ENCODE measurements at regions of chr2 and their contacts with region 1.

Region 1: DNA sequence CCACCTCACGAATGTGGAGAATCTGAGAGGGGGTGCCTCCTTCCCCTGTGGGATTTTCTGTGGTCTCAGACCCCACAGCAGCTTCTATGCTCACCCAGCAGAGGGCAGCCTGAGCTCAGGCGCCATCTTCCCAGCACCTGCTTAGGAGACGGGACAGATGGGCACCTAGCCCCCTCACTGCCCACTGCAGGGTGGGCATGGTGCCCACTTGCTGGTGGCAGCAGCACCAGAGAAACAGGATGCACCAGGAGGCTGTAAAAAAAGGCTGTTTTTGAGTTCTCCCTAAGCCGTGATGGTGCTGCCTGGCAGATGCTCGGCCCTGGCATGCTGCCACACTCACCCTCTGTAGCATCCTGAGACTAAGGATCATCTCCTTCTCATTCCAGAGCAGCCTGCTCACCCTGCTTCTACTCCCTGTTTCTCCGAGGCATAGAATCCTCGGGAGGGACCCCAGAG is 19.1 kb upstream of the SLC20A1 start:
- DNase-seq: peak; percentile 75
- ATAC-seq: peak; percentile 30
- H3K4me3 Mint-ChIP-seq: peak overlapping the region; percentile 50
- H3K27ac Mint-ChIP-seq: peak overlapping the region; percentile 85
- H3K4me1 Mint-ChIP-seq: peaks cover 57% of the 10 kb centered on the region
- H3K27me3 Mint-ChIP-seq: peaks cover 3% of the 10 kb centered on the region

Region 2: GRCh38 chr2:112259509-112260294 is 366.9 kb before region 1 on chr2:
- POLR2A ChIA-PET with region 1: no interaction called
- DNase-seq: peak; percentile 79
- ATAC-seq: peak; percentile 21
- H3K4me3 Mint-ChIP-seq: peak overlapping the region; percentile 51
- H3K27ac Mint-ChIP-seq: peak overlapping the region; percentile 79
- H3K4me1 Mint-ChIP-seq: peaks cover 15% of the 10 kb centered on the region
- H3K27me3 Mint-ChIP-seq: peaks cover 11% of the 10 kb centered on the region

Region 3: GRCh38 chr2:112584134-112584890 is 42.3 kb before region 1 on chr2 and contains the start of gene CHCHD5:
- POLR2A ChIA-PET with region 1: interaction called, 11 read pairs
- DNase-seq: peak; percentile 91
- ATAC-seq: peak; percentile 90
- H3K4me3 Mint-ChIP-seq: peak within 1 kb of the TSS; percentile 97
- H3K27ac Mint-ChIP-seq: peak within 1 kb of the TSS; percentile 99
- H3K4me1 Mint-ChIP-seq: peaks cover 29% of the 10 kb centered on the region
- H3K27me3 Mint-ChIP-seq: no peaks in the 10 kb centered on the region
- total RNA-seq, gene CHCHD5: 32.1 to 35.2 TPM

Region 4: DNA sequence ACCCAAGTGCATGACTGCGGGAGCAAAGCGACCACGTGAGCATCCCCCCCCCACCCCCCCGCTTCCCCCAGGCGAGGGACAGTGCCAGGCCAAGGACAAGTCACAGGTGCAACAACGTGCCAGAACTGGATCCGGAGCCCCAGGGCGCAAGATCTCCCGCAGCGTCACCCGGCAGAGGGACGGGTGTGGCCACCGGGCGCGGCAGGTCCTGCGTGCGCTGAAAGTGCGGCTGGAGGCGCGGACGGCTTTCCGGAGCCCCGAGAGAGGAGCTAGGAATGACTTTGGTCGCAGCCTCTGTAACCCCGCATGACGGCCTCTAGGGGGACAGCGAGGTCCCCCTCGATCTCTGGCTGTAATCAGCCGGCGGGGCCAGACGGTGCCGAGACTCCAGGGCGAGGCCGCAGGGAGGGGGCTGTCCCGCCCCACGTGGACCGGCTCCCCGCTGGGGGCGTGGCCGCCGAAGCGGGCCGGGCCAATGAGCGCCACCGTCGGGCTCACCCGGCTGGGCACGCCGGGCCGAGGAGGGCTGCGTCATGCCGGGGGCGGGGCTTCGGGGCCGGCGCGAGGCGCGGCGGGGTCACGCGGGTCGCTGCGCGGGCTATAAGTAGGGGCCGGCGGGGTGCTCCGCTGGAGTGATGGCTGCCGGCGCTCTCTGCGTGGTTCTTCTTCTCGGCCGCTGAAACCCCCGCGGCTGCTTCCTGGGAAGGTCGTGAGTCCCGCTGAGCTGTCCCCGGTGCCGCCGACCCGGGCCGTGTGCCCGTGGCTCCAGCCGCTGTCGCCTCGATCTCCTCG is 18.9 kb after region 1 on chr2 and contains the start of gene SLC20A1:
- POLR2A ChIA-PET with region 1: interaction called, 293 read pairs
- DNase-seq: peak; percentile 100
- ATAC-seq: peak; percentile 91
- H3K4me3 Mint-ChIP-seq: peak within 1 kb of the TSS; percentile 97
- H3K27ac Mint-ChIP-seq: peak within 1 kb of the TSS; percentile 87
- H3K4me1 Mint-ChIP-seq: peaks cover 63% of the 10 kb centered on the region
- H3K27me3 Mint-ChIP-seq: no peaks in the 10 kb centered on the region
- total RNA-seq, gene SLC20A1: 105 to 113 TPM

Region 5: DNA sequence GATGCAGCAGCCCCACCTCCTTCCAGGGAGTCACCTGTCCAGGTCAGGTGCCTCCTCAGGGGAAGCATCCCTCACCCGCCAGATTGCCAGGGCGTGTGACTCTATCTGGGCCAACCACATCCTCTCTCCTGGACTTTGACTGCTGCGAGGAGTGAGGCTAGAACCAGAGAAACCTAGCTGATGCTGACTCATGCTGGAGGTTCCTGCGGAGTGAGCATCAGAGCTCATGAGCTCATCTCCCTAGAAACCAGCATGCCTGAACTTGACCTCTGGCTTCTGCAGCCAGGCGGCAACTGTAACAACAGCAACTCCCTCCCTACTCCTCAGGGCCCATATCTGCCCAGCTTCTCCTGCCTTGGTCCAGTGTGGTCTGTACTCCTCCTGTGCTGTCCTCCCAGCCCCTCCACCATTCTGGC is 65.9 kb after region 1 on chr2:
- POLR2A ChIA-PET with region 1: interaction called, 15 read pairs
- DNase-seq: peak; percentile 57
- ATAC-seq: peak; percentile 88
- H3K4me3 Mint-ChIP-seq: peak overlapping the region; percentile 54
- H3K27ac Mint-ChIP-seq: peak overlapping the region; percentile 39
- H3K4me1 Mint-ChIP-seq: peaks cover 23% of the 10 kb centered on the region
- H3K27me3 Mint-ChIP-seq: peaks cover 21% of the 10 kb centered on the region

Region 6: DNA sequence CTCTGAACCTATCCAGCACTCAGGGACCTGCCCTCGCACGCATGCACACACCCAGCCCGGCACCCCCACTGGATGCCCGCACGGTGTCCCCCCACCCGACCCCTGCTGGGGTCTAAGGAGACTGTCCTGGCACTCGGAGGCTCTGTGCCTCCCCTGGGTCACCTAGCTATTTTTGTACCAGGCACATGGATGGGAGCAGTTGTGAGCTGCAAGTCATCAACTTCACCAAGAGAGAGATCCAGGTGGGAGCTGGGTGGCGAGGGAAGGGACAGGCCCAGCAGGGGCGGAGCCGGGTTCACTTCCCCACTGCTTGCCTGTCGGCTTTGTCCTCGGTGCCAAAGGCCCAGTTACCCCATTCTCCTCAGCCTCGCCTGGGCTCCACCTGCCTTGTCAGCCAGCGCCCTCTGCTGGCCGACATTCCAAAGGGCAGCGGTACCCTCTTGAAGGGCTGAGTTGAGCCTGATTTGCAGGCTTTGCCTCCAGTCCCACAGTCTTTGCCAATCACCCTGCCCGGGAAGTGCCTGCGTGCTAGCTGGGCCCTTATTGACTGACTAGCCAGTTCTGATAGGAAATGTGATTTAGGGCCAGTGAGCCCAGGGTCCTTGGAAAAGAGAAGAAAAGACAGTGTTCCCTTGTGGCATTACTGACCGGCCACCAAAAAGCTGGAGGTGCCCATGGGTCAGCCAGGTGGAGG is 100.0 kb after region 1 on chr2:
- POLR2A ChIA-PET with region 1: interaction called, 12 read pairs
- DNase-seq: peak; percentile 92
- ATAC-seq: peak; percentile 96
- H3K4me3 Mint-ChIP-seq: no peak overlapping the region
- H3K27ac Mint-ChIP-seq: no peak overlapping the region
- H3K4me1 Mint-ChIP-seq: peaks cover 1% of the 10 kb centered on the region
- H3K27me3 Mint-ChIP-seq: peaks cover 14% of the 10 kb centered on the region